ENCODE measurements at regions of chr3 and their contacts with region 1.

Region 1: GRCh38 chr3:111978493-111979433 is at the start of gene ABHD10:
- DNase-seq: peak; percentile 100
- ATAC-seq: peak; percentile 94
- H3K4me3 ChIP-seq: peak within 1 kb of the TSS; percentile 77 to 78
- H3K27ac ChIP-seq: peak within 1 kb of the TSS; percentile 90
- H3K4me1 ChIP-seq: peaks cover 25 to 33% of the 10 kb centered on the region in 2 experiments
- H3K27me3 ChIP-seq: no peaks in the 10 kb centered on the region
- CTCF ChIP-seq: no peak
- POLR2A ChIP-seq: peak; percentile 89
- RAD21 ChIP-seq: no peak
- total RNA-seq, gene ABHD10: 295 TPM

Region 2: GRCh38 chr3:111895079-111895478 is 83.7 kb before region 1 on chr3:
- CTCF ChIA-PET with region 1: interaction called, 8 read pairs
- POLR2A ChIA-PET with region 1: interaction called, 18 read pairs
- RAD21 ChIA-PET with region 1: interaction called in 1 of 2 experiments, 4 read pairs
- intact Hi-C with region 1: no loop called
- DNase-seq: peak; percentile 75
- ATAC-seq: peak; percentile 82
- H3K4me3 ChIP-seq: no peak overlapping the region
- H3K27ac ChIP-seq: peak overlapping the region; percentile 58
- H3K4me1 ChIP-seq: peaks cover 23 to 73% of the 10 kb centered on the region in 2 experiments; a peak in 3 of 4 replicates
- H3K27me3 ChIP-seq: no peaks in the 10 kb centered on the region
- CTCF ChIP-seq: peak in 2 of 3 experiments; percentile 64 to 81; a peak in 4 of 6 replicates
- POLR2A ChIP-seq: no peak
- RAD21 ChIP-seq: no peak

Region 3: GRCh38 chr3:111924283-111924682 is 54.5 kb before region 1 on chr3:
- CTCF ChIA-PET with region 1: interaction called, 5 read pairs
- POLR2A ChIA-PET with region 1: interaction called, 12 read pairs
- RAD21 ChIA-PET with region 1: no interaction called
- intact Hi-C with region 1: no loop called
- DNase-seq: no peak
- ATAC-seq: no peak
- H3K4me3 ChIP-seq: no peak overlapping the region
- H3K27ac ChIP-seq: peak overlapping the region; percentile 96
- H3K4me1 ChIP-seq: peaks cover 69 to 95% of the 10 kb centered on the region in 2 experiments
- H3K27me3 ChIP-seq: no peaks in the 10 kb centered on the region
- CTCF ChIP-seq: no peak
- POLR2A ChIP-seq: no peak
- RAD21 ChIP-seq: no peak

Region 4: DNA sequence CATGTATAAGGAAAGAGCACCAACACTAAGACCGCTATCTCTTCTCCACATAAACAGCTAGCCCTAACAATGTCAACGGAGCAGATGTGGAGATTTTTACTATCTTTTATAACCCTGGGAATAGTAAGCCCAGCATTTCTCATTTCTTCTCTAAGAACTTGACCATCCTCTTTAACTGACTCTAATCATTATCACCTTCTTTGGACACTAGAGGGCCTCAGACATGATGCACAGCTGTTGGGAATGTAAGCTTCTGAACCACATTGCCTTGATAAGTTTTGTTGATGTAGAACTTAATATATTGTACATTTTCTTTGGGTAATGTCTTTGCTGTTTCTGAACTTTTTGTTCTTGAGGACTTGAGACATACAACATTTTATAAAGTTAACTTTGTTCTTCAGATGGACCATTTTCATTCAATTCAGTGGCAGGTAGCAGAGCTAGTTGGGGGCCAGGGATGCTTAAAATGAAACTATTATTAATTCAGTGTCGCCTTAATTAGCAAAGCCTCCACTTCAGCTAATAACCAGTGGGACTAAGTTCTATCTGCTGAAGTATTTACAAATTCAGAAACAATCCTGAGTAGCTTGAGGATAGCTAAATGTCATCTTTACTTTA is 10.4 kb after region 1 on chr3:
- CTCF ChIA-PET with region 1: interaction called, 56 read pairs
- POLR2A ChIA-PET with region 1: interaction called, 33 read pairs
- RAD21 ChIA-PET with region 1: no interaction called
- intact Hi-C with region 1: no loop called
- DNase-seq: peak; percentile 63
- ATAC-seq: peak; percentile 87
- H3K4me3 ChIP-seq: no peak overlapping the region
- H3K27ac ChIP-seq: peak overlapping the region; percentile 20; the same call in 1 of the 2 replicates
- H3K4me1 ChIP-seq: no peaks in the 10 kb centered on the region
- H3K27me3 ChIP-seq: no peaks in the 10 kb centered on the region
- CTCF ChIP-seq: peak; percentile 76 to 94 (median 86)
- POLR2A ChIP-seq: no peak
- RAD21 ChIP-seq: peak; percentile 78

Region 5: DNA sequence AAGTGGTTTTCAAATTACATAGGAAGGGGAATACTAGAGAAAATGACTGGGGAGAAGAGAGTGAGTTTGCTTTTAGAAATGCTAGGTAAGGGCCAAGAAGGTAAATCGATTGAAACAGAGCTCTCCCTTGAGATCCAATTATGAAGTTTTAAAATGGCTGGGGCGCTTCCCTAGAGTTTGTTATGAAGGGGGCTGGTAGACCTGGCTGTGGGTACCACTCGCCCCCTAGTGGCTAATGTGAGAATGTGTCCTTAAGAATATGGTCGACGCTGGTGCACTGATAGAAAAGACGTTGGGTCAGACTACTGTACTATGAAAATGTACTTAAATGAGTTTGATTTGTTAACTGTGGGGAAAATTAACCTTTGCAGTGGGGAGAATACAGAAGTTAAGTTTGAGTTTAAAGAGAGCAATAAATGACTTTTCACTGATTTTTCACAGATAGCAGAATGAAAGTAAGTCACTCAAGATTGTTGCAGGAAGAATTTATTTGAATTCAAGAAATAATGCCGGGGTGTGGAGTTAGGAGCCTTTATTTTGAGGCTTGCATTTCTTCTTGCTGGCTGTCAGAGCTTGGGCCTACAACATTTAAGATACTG is 64.9 kb after region 1 on chr3:
- CTCF ChIA-PET with region 1: interaction called, 12 read pairs
- POLR2A ChIA-PET with region 1: interaction called, 3 read pairs
- RAD21 ChIA-PET with region 1: no interaction called
- intact Hi-C with region 1: no loop called
- DNase-seq: peak; percentile 75
- ATAC-seq: peak; percentile 97
- H3K4me3 ChIP-seq: peak overlapping the region; percentile 11 to 40; a peak in 3 of 4 replicates
- H3K27ac ChIP-seq: no peak overlapping the region; the same call in 1 of the 2 replicates
- H3K4me1 ChIP-seq: peaks cover 0 to 26% of the 10 kb centered on the region in 2 experiments; a peak in 2 of 4 replicates
- H3K27me3 ChIP-seq: no peaks in the 10 kb centered on the region
- CTCF ChIP-seq: peak; percentile 87 to 99 (median 96)
- POLR2A ChIP-seq: no peak
- RAD21 ChIP-seq: peak; percentile 91

Region 6: GRCh38 chr3:112132975-112133448 is 154.2 kb after region 1 on chr3 and contains the start of gene GCSAM:
- CTCF ChIA-PET with region 1: no interaction called
- POLR2A ChIA-PET with region 1: no interaction called
- RAD21 ChIA-PET with region 1: no interaction called
- intact Hi-C with region 1: no loop called
- DNase-seq: no peak
- ATAC-seq: no peak
- H3K4me3 ChIP-seq: no peak within 1 kb of the TSS
- H3K27ac ChIP-seq: no peak within 1 kb of the TSS
- H3K4me1 ChIP-seq: no peaks in the 10 kb centered on the region; a peak in 1 of 4 replicates
- H3K27me3 ChIP-seq: no peaks in the 10 kb centered on the region
- CTCF ChIP-seq: no peak
- POLR2A ChIP-seq: no peak
- RAD21 ChIP-seq: no peak
- total RNA-seq, gene GCSAM: not detected

Measured in HCT116 (cell line).